CD4-positive, alpha-beta memory T cell (primary cell): ENCODE measurements at regions of chr19 and their contacts with region 1.

Region 1: GRCh38 chr19:7852851-7853769 is 21.1 kb downstream of the PRR36 start:
- DNase-seq: peak; percentile 47 to 60 (median 54)
- H3K4me3 ChIP-seq: no peak overlapping the region
- H3K4me3 Mint-ChIP-seq: no peak overlapping the region
- H3K27ac ChIP-seq: no peak overlapping the region
- H3K27ac Mint-ChIP-seq: peak overlapping the region in 1 of 7 donors; percentile 77
- H3K4me1 ChIP-seq: peaks cover 8% of the 10 kb centered on the region
- H3K4me1 Mint-ChIP-seq: peaks cover 3 to 10% (median 6%) of the 10 kb centered on the region in 4 donors
- H3K27me3 ChIP-seq: no peaks in the 10 kb centered on the region
- H3K27me3 Mint-ChIP-seq: no peaks in the 10 kb centered on the region

Region 2: DNA sequence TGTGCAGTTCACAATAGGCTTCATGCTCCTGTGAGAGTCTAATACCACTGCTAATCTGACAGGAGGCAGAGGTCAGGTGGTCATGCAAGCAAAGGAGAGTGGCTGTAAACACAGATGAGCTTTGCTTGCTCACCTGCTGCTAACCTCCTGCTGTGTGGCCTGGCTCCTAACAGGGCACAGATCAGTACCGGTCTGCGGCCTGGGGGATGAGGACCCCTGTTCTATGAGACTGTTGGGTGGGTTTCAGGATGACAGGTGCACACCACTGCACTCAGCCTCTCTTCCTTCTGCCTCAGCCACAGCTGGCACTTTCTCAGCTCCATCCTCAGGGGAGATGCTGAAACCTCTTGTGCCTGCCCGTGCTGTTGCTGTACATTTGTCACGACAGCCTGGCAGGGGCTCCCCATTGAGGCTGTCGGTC is 130.9 kb before region 1 on chr19:
- CTCF ChIA-PET with region 1: no interaction called
- POLR2A ChIA-PET with region 1: no interaction called
- intact Hi-C with region 1: no loop called
- DNase-seq: no peak
- H3K4me3 ChIP-seq: no peak overlapping the region
- H3K4me3 Mint-ChIP-seq: no peak overlapping the region
- H3K27ac ChIP-seq: no peak overlapping the region
- H3K27ac Mint-ChIP-seq: no peak overlapping the region
- H3K4me1 ChIP-seq: peaks cover 5% of the 10 kb centered on the region
- H3K4me1 Mint-ChIP-seq: peaks cover 0 to 1% (median 0%) of the 10 kb centered on the region in 4 donors
- H3K27me3 ChIP-seq: no peaks in the 10 kb centered on the region
- H3K27me3 Mint-ChIP-seq: peaks cover under 1 to 4% of the 10 kb centered on the region in 2 donors

Region 3: DNA sequence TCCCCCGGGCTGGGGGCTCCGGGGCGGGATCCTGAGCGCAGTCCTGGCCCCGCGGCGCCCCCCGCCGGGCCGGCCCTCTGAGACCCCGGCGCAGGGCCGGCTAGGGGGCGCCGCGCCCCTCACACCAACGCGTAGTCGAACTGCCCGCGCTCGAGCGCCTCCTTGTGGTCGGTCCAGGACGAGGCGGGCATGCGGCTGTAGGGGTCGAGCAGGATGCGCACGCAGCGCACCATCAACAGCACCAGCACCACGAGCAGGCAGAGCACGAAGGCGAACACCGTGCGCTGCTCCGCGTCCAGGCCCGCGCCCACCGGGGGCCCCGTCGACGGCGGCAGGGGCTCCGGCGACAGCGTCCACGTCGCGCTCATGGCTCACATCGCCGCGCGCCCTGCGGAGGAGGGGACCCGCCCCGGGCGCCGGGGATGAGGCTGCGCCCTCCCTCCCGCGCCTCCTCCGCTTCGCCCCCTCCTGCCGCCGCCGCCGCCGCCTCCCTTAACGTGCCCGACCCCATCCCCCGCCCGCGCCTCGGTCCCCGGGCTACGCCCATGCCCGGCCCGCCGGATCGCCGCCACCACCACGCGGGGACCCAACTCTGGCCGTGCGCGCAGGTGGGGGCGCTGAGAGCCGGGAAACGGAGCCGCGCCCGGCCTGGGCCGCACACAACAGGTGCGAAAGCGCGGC is 72.2 kb after region 1 on chr19:
- CTCF ChIA-PET with region 1: interaction called, 6 read pairs
- POLR2A ChIA-PET with region 1: no interaction called
- intact Hi-C with region 1: loop called (anchors 1 kb)
- DNase-seq: peak; percentile 70 to 78 (median 74)
- H3K4me3 ChIP-seq: no peak overlapping the region
- H3K4me3 Mint-ChIP-seq: peak overlapping the region; percentile 64 to 90 (median 83)
- H3K27ac ChIP-seq: no peak overlapping the region
- H3K27ac Mint-ChIP-seq: peak overlapping the region in 6 of 7 donors; percentile 53 to 84 (median 72)
- H3K4me1 ChIP-seq: peaks cover 24% of the 10 kb centered on the region
- H3K4me1 Mint-ChIP-seq: peaks cover 4 to 43% (median 24%) of the 10 kb centered on the region in 4 donors
- H3K27me3 ChIP-seq: no peaks in the 10 kb centered on the region
- H3K27me3 Mint-ChIP-seq: no peaks in the 10 kb centered on the region

Region 4: DNA sequence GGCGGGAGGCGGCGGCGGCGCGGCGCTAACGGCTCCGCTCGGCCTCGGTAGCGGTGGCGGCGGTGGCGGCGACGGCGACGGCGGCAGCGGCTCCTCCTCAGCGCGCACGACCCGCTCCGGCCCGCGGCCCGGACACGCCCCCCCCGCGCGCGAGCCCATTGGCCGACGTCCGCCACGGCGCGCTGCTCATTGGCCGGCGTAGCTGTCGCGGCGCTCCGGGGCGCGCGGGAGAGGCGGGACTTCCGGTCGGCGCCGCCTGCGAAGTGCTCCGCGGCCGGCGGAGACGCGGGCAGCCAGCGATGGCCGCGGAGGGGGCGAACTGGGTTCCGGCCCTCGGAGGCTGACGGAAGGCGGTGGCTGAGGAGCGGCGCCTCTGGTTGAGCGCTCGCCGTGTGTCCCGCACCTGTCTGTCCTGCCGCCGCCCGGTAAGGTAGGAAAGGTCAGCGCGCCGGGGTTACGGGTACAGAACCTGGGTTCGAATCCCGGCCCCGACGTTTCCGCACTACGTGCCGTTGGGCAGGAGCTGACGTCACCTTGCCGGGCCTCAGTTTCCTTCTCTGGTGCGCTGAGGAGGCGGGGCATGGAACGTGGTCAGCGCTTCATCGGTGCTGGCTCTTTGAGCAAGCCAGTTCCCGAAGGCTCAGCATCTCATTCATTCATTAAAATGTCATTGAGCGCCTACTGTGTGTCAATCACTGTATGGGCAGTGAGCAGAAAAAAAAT is 152.6 kb after region 1 on chr19 and contains the start of gene ELAVL1:
- CTCF ChIA-PET with region 1: interaction called, 5 read pairs
- POLR2A ChIA-PET with region 1: no interaction called
- intact Hi-C with region 1: loop called (anchors 2 kb)
- DNase-seq: peak; percentile 86 to 91 (median 88)
- H3K4me3 ChIP-seq: peak within 1 kb of the TSS; percentile 39 to 77
- H3K4me3 Mint-ChIP-seq: peak within 1 kb of the TSS; percentile 89 to 97 (median 91)
- H3K27ac ChIP-seq: peak within 1 kb of the TSS; percentile 70
- H3K27ac Mint-ChIP-seq: peak within 1 kb of the TSS; percentile 85 to 97 (median 93)
- H3K4me1 ChIP-seq: peaks cover 42% of the 10 kb centered on the region
- H3K4me1 Mint-ChIP-seq: peaks cover 33 to 39% (median 37%) of the 10 kb centered on the region in 4 donors
- H3K27me3 ChIP-seq: no peaks in the 10 kb centered on the region
- H3K27me3 Mint-ChIP-seq: no peaks in the 10 kb centered on the region
- total RNA-seq, gene ELAVL1: 54.2 to 54.7 TPM